ENCODE measurements at regions of chr9 and their contacts with region 1.

Region 1: GRCh38 chr9:79694676-79695400 is 123.1 kb downstream of the TLE4 start:
- DNase-seq: no peak
- ATAC-seq: peak; percentile 23
- H3K4me3 Mint-ChIP-seq: no peak overlapping the region
- H3K27ac Mint-ChIP-seq: no peak overlapping the region
- H3K4me1 Mint-ChIP-seq: peaks cover 43% of the 10 kb centered on the region
- H3K27me3 Mint-ChIP-seq: no peaks in the 10 kb centered on the region

Region 2: DNA sequence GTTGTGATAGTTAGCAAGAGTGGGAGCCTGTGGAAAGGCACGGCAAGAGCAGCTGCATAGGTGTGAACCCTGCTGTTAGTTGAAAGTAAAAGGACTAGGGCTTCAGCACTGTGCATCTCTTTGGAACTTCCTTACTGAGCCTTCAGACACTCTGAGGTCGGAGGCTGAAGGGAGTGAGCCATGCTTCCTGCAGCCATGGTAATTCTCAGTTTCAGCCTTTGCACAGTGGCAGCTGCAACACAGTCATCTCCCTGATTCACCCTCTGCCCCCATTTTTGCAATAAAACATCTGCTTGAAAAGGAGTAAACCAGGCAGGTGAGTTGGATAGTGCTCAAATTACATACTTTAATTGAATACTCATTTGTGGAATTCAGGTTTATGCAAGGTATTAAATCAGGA is 129.6 kb before region 1 on chr9:
- CTCF ChIA-PET with region 1: no interaction called
- POLR2A ChIA-PET with region 1: no interaction called
- intact Hi-C with region 1: no loop called
- DNase-seq: peak; percentile 63
- ATAC-seq: peak; percentile 97
- H3K4me3 Mint-ChIP-seq: no peak overlapping the region
- H3K27ac Mint-ChIP-seq: no peak overlapping the region
- H3K4me1 Mint-ChIP-seq: peaks cover 14% of the 10 kb centered on the region
- H3K27me3 Mint-ChIP-seq: peaks cover 22% of the 10 kb centered on the region

Region 3: GRCh38 chr9:79583952-79584654 is 110.7 kb before region 1 on chr9:
- CTCF ChIA-PET with region 1: no interaction called
- POLR2A ChIA-PET with region 1: no interaction called
- intact Hi-C with region 1: loop called in 1 of 2 experiments (anchors 5 kb)
- DNase-seq: peak; percentile 68
- ATAC-seq: peak; percentile 86
- H3K4me3 Mint-ChIP-seq: peak overlapping the region; percentile 24
- H3K27ac Mint-ChIP-seq: peak overlapping the region; percentile 30
- H3K4me1 Mint-ChIP-seq: peaks cover 67% of the 10 kb centered on the region
- H3K27me3 Mint-ChIP-seq: no peaks in the 10 kb centered on the region

Region 4: DNA sequence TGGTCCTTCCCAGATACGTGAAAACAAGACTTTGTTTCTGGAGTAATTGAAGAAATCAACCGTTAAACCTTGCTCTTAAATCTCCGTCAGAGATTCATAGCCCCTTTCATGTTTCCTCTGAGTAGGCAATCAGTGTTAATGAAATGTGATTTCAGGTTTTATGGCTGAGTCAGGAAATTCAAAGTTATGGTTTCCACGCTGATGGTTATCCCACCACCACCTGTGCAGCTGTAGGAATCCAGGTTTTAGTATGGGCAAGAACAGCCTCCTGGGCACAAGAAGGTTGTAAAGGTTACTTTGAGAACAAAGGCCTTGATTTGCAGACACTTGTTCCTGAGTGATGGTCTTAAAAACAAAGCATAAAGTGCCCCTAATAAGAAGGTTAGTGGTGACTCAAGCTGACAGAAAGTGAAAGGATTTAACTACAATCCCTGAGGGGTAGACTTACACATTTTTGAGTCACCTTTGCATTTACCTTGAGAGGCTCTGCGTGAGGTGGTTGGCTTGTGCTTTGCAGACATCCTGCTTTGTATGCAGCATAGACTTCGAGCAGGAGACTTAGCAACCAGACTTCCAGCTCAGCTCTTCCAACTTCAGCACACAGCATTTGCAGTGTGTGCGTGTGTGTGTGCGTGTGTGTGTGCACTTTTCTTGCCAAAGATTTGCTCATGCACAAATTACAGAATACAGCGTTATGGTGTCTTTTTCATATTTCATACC is 36.5 kb after region 1 on chr9:
- CTCF ChIA-PET with region 1: no interaction called
- POLR2A ChIA-PET with region 1: no interaction called
- intact Hi-C with region 1: no loop called
- DNase-seq: peak; percentile 23
- ATAC-seq: peak; percentile 82
- H3K4me3 Mint-ChIP-seq: no peak overlapping the region
- H3K27ac Mint-ChIP-seq: no peak overlapping the region
- H3K4me1 Mint-ChIP-seq: peaks cover 3% of the 10 kb centered on the region
- H3K27me3 Mint-ChIP-seq: no peaks in the 10 kb centered on the region

Region 5: DNA sequence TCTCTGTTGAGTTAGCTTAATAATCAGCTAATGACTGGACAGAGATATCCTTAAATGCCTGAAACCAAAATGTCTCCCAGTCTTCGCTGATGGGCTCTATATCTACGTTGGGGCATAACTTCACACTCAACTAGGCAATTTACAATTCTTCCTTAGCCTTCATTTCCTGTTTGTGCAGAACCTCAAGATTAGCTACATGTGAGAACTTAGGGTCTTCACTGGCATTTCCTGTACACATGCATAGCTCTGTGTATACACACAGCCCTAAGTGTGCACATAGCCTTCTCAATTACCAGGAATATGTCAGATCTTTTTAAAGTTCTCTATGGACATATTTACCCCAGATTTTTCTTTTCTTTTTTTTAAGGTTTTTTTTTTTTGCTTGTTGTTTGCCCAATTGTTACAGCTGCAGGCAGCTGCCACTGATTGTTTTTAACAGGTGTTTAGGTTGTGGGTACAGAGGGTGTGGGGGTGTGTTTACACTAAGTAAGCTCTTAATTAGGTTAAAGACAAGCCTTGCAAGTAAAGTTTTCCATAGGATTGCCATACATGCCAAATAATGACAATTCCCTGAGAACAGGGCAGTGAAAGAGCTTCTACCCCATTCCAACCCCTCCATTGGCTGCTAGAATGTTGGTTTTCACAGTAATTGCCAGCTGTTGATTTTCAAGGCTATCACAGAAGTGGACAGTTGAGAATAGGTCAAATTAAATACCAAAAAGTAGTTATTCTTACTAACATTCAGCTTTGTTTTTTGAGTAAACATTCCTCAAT is 317.9 kb after region 1 on chr9:
- CTCF ChIA-PET with region 1: no interaction called
- POLR2A ChIA-PET with region 1: no interaction called
- intact Hi-C with region 1: no loop called
- DNase-seq: no peak
- ATAC-seq: no peak
- H3K4me3 Mint-ChIP-seq: no peak overlapping the region
- H3K27ac Mint-ChIP-seq: no peak overlapping the region
- H3K4me1 Mint-ChIP-seq: no peaks in the 10 kb centered on the region
- H3K27me3 Mint-ChIP-seq: peaks cover 3% of the 10 kb centered on the region

Region 6: DNA sequence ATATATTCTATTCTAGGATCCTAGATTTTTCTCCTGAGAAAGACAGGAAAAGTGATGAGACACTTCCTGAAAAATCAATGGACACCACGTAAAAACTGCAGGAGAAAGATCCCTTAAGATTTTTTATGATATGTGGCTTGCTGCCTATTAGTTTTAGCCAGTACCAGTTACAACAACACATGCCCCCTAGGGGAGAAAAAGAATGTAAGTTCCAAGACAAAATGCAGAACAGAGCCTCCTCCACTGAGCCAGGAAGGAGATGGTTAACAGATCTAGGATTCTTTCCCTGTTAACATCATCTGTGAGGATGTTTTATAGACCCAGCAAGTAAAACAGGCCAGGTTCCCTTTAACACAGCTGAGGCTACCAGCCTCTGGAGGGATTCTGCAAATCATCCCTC is 451.6 kb after region 1 on chr9:
- CTCF ChIA-PET with region 1: no interaction called
- POLR2A ChIA-PET with region 1: no interaction called
- intact Hi-C with region 1: no loop called
- DNase-seq: no peak
- ATAC-seq: no peak
- H3K4me3 Mint-ChIP-seq: no peak overlapping the region
- H3K27ac Mint-ChIP-seq: no peak overlapping the region
- H3K4me1 Mint-ChIP-seq: no peaks in the 10 kb centered on the region
- H3K27me3 Mint-ChIP-seq: peaks cover 2% of the 10 kb centered on the region